Activated naive CD4-positive, alpha-beta T cell treated with anti-CD3 and anti-CD28 coated beads for 36 hours (primary cell): ENCODE measurements at regions of chr1 and their contacts with region 1.

Region 1: GRCh38 chr1:221829327-221830015 is 87.6 kb upstream of the DUSP10 start:
- DNase-seq: peak; percentile 83
- H3K4me3 Mint-ChIP-seq: peak overlapping the region; percentile 14
- H3K27ac Mint-ChIP-seq: peak overlapping the region; percentile 83
- H3K4me1 Mint-ChIP-seq: peaks cover 45% of the 10 kb centered on the region
- H3K27me3 Mint-ChIP-seq: no peaks in the 10 kb centered on the region

Region 2: DNA sequence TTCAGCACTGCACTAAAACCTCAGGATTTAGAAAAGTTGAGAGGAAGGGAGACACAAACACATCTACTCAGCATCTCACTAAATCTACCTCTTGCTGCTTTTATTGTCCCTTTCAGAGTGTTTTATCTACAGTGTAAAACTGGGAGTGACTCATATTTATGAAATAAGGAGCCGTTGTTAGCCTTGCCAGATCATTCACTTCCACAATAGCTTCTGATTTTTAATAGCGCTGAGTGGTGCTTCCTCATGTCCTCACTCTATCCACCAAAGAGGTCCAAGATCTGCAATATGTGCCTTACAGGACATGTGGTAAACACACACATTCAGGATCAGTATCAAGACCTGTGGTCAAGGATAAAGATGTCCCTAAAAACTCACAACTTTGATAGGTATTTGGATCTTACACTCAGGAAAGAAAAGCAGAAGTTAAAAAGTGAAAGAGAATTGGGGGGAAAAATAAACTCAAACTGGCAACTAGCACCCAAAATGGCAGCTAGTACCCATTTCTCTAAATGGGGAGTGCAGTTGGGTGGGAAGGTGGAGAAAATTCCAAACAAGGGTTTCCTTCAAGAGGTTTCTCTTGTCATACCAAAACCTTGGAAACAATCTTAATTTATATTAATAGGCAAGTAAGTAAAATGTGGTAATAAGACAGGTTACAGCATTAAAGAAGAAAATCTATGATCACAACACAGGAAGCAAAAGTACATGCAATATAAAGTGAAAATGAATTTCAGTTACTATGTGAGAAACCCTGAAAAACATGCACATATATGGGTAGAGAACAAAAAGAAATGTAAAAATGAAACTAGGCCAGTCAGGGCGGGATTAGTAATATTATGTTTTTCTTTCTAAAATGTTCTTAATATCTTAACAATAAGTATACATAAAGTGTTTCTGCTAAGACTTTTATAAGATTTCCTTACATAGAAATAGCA is 103.5 kb before region 1 on chr1:
- CTCF ChIA-PET with region 1: no interaction called
- intact Hi-C with region 1: loop called (anchors 1 kb)
- DNase-seq: no peak
- H3K4me3 Mint-ChIP-seq: peak overlapping the region; percentile 69
- H3K27ac Mint-ChIP-seq: peak overlapping the region; percentile 99
- H3K4me1 Mint-ChIP-seq: peaks cover 67% of the 10 kb centered on the region
- H3K27me3 Mint-ChIP-seq: no peaks in the 10 kb centered on the region

Region 3: DNA sequence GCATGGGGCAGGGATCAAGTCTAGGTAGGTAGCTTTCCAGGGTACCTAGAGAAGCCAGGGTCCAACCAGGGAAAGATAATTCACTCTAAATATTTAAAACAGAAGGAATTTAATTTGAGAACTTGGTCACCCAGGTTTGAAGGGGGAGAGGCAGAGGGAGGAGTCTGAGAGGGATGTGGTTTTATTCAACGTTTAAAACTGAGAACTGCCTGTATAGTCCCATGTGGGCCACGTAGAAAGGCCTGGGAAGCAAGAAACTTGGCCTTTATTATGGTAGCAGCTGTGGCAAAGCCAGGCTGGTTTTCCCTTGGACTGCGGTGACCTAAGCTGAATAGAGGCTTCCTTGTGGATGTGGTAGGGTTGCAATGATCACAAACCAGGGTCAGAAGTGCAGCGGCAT is 45.5 kb before region 1 on chr1:
- CTCF ChIA-PET with region 1: no interaction called
- intact Hi-C with region 1: no loop called
- DNase-seq: peak; percentile 24
- H3K4me3 Mint-ChIP-seq: no peak overlapping the region
- H3K27ac Mint-ChIP-seq: no peak overlapping the region
- H3K4me1 Mint-ChIP-seq: peaks cover 43% of the 10 kb centered on the region
- H3K27me3 Mint-ChIP-seq: no peaks in the 10 kb centered on the region

Region 4: DNA sequence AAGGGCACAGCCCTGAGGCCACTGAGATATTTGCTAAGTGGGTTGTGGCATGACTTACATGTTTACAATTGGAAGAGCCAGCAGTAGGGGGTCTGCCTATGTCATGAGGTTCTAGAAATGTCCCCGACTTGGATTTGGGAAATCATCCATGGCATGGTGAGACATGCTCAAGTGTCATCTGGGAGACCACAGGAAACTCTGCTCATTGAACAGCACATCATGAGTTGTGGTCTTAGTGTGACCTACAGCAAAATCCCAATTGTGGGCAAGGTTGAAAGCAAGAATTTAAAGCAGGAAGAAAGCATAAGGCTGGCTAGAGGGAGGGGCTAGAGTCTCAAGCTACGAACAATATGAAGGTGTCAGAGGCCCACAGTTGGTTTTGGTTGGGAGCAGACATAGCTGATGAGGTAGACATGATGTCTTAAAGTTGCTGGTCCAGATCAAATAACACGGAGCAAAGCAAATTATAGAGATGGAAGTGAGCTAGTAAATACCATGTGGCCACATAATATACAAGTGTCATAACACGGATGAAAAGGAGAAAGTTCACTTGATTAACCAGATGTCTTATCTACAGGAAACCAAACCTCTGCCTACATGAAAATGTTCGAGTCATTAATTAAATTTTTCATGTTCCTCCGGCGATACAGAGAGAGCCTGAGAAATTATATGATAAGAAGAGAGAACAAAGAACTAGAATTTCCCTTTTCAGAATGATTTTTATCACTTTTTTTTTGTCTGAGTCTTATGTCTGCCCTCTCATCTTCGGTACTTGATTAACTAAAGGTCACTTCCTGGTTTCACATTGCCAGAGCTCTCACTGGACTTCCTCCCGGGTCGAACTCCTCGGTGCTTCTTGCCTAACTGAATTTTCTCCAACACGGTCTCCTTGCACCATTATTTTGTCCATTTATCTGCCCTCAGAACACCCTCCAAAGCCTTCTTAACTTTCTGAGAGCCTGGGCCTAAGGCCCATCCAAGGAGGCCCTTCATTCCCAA is 20.1 kb before region 1 on chr1:
- CTCF ChIA-PET with region 1: no interaction called
- intact Hi-C with region 1: loop called (anchors 1 kb)
- DNase-seq: no peak
- H3K4me3 Mint-ChIP-seq: no peak overlapping the region
- H3K27ac Mint-ChIP-seq: peak overlapping the region; percentile 12
- H3K4me1 Mint-ChIP-seq: peaks cover 44% of the 10 kb centered on the region
- H3K27me3 Mint-ChIP-seq: no peaks in the 10 kb centered on the region